ENCODE measurements at regions of chr20 and their contacts with region 1.

Region 1: GRCh38 chr20:35954200-35954906 is at the start of gene SCAND1:
- DNase-seq: peak; percentile 95 to 99
- ATAC-seq: peak; percentile 94
- H3K4me3 ChIP-seq: peak within 1 kb of the TSS; percentile 95
- H3K27ac ChIP-seq: peak within 1 kb of the TSS; percentile 96 to 97
- H3K4me1 ChIP-seq: peaks cover 15% of the 10 kb centered on the region
- CTCF ChIP-seq: peak; percentile 99
- EP300 ChIP-seq: no peak
- POLR2A ChIP-seq: peak; percentile 85
- RAD21 ChIP-seq: peak; percentile 46 to 69; a peak in 4 of 5 replicates
- polyA plus RNA-seq, gene SCAND1: 9.1 and 10.2 TPM in 2 replicates

Region 2: DNA sequence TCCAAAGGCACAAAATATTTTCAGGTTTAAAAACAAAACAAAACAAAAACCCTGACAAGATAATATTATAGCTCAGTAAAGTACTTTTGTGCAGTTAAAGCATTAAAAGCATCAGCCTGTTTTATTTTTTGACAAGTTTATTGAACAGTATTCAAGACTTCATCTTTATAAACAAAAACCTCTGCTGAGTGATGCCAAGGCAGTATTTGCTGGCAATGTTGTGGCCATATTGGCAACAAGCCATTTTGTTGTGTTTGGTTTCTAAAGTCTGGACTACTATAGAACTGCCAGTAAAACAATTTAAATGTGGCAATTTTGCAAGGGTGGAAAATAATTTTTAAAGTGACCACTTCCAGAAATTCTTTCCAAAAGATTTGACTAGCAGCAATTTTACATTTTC is 305.5 kb before region 1 on chr20:
- CTCF ChIA-PET with region 1: no interaction called
- POLR2A ChIA-PET with region 1: no interaction called
- DNase-seq: no peak
- ATAC-seq: no peak
- H3K4me3 ChIP-seq: no peak overlapping the region
- H3K27ac ChIP-seq: no peak overlapping the region
- H3K4me1 ChIP-seq: no peaks in the 10 kb centered on the region; the same call in 2 of the 3 replicates
- CTCF ChIP-seq: no peak
- EP300 ChIP-seq: no peak
- POLR2A ChIP-seq: no peak
- RAD21 ChIP-seq: no peak

Region 3: DNA sequence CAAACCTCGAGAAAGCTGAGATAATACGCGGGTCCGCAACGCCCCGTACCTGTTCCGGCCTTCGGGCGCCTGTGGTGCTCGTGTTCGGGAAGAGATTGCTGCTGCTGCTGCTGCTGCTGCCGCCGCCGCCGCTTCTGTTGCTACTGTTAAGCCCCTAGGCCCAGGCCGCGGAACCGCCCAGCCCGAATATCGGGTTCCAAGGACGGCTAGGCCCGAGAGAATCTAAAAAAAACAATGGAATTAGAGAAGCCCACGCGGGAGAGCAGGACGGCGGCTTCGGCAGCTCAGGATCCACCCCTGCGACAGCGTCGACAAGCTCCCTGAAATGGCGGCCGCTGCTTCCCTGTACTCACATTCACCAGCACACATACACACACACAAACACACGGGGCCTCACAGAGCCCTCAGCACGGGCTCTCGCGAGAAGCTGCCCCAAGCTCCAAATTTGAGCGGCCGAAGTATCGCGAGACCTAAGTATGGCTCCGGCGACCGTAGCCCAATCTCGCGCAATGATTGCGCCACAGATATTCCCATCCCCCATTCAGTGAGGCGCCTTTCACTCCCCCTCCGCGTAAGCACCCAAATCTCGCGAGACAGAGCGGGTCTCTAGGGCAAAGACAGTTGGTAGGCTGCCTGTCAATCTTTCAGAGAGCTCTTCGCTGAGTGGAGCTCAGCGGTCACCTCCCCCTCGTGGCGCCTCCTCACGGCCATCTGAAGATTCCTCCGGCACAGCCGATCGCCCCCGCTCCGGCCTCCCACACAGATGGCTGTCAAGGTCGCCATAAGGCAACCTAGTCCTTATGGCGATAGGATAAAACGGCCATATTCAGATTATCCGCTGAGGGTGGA is 212.2 kb before region 1 on chr20 and contains the start of gene RBM39:
- CTCF ChIA-PET with region 1: interaction called, 11 read pairs
- POLR2A ChIA-PET with region 1: interaction called, 32 read pairs
- DNase-seq: peak; percentile 95 to 100
- ATAC-seq: peak; percentile 93 to 95
- H3K4me3 ChIP-seq: peak within 1 kb of the TSS; percentile 87
- H3K27ac ChIP-seq: peak within 1 kb of the TSS; percentile 98
- H3K4me1 ChIP-seq: peaks cover 45% of the 10 kb centered on the region
- CTCF ChIP-seq: no peak
- EP300 ChIP-seq: peak in 1 of 2 experiments; percentile 49; a peak in 1 of 5 replicates
- POLR2A ChIP-seq: peak; percentile 89
- RAD21 ChIP-seq: 0 out of 5 replicates have a peak, but pooled peaks of 1 of the 2 experiments have one; percentile 18
- polyA plus RNA-seq, gene RBM39: 127 and 264 TPM in 2 replicates

Region 4: GRCh38 chr20:35912881-35913280 is 41.5 kb before region 1 on chr20:
- CTCF ChIA-PET with region 1: interaction called, 10 read pairs
- POLR2A ChIA-PET with region 1: no interaction called
- DNase-seq: no peak
- ATAC-seq: no peak
- H3K4me3 ChIP-seq: no peak overlapping the region
- H3K27ac ChIP-seq: no peak overlapping the region
- H3K4me1 ChIP-seq: no peaks in the 10 kb centered on the region
- CTCF ChIP-seq: no peak
- EP300 ChIP-seq: no peak
- POLR2A ChIP-seq: no peak
- RAD21 ChIP-seq: no peak

Region 5: GRCh38 chr20:35968931-35969330 is 14.6 kb after region 1 on chr20:
- CTCF ChIA-PET with region 1: interaction called, 82 read pairs
- POLR2A ChIA-PET with region 1: interaction called, 8 read pairs
- DNase-seq: no peak
- ATAC-seq: peak; percentile 24 to 34; a peak in 4 of 6 replicates
- H3K4me3 ChIP-seq: no peak overlapping the region
- H3K27ac ChIP-seq: no peak overlapping the region
- H3K4me1 ChIP-seq: peaks cover 4% of the 10 kb centered on the region; the same call in 1 of the 3 replicates
- CTCF ChIP-seq: no peak
- EP300 ChIP-seq: no peak
- POLR2A ChIP-seq: no peak
- RAD21 ChIP-seq: no peak

Region 6: GRCh38 chr20:35988910-35989463 is 34.6 kb after region 1 on chr20:
- CTCF ChIA-PET with region 1: interaction called, 34 read pairs
- POLR2A ChIA-PET with region 1: interaction called, 8 read pairs
- DNase-seq: no peak
- ATAC-seq: no peak
- H3K4me3 ChIP-seq: no peak overlapping the region
- H3K27ac ChIP-seq: no peak overlapping the region
- H3K4me1 ChIP-seq: peaks cover 15% of the 10 kb centered on the region
- CTCF ChIP-seq: no peak
- EP300 ChIP-seq: no peak
- POLR2A ChIP-seq: no peak
- RAD21 ChIP-seq: no peak

Region 7: DNA sequence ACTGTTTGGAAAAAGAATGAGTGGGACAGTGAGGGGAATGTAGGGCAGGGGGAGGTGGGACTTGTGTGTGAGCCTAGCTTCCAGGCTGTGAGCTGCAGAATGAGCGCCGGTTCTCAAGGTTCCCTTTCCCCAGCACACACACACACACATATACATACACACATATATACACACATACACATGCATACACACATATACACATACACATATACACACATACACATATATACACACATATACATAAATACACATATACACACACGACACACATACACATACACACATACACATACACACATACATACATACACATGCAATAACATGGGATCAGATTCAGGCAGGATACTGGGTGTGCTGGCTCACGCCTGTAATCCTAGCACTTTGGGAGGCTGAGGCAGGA is 80.5 kb after region 1 on chr20:
- CTCF ChIA-PET with region 1: no interaction called
- POLR2A ChIA-PET with region 1: no interaction called
- DNase-seq: no peak
- ATAC-seq: no peak
- H3K4me3 ChIP-seq: no peak overlapping the region
- H3K27ac ChIP-seq: no peak overlapping the region
- H3K4me1 ChIP-seq: peaks cover 11% of the 10 kb centered on the region; the same call in 2 of the 3 replicates
- CTCF ChIP-seq: no peak
- EP300 ChIP-seq: no peak
- POLR2A ChIP-seq: no peak
- RAD21 ChIP-seq: no peak

Region 8: DNA sequence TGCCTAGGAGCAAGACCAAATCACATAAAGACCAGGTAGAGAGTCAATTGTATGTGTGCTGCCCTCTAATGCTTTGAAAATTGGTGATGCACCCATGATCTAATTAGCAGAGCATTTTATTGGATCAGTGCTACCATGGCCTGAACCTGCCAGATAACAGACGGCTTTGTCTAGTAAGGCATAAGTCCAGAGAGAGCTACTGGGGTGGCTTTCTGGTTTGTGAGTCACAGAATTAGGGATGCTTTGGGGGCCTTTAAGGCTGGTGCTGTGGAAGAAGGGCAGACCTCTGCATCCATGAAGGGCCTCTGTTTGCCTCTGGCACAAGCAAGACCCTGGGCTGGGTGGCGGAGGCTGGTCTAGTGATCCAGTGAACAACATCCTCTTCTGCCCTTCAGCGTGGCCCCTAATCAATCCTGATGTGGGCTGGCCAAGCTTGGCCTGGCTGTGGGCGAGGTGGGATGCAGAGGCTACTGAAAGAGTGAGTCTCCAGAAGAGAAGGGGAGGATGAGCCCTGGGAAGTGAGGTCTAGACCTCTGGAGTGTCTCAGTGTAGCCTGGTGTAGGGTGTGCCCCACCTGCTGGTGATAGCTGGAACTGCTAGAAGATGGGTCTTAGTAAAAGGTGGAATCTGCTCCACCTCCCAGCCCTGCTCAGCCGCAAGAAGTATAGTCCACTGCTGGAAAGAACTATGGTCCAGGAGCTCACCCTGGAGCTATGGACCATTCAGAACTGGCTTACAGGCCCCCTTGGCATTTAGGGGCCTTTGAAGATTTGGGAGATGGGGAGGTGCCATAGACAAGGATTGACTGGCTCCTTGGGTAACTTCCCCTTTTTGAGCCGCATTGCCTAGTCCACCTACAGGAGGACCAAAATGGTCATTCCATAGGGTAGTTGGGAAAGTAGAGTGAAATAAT is 245.2 kb after region 1 on chr20:
- CTCF ChIA-PET with region 1: interaction called, 10 read pairs
- POLR2A ChIA-PET with region 1: no interaction called
- DNase-seq: peak; percentile 80 to 91
- ATAC-seq: peak; percentile 89 to 94
- H3K4me3 ChIP-seq: no peak overlapping the region
- H3K27ac ChIP-seq: peak overlapping the region in 1 of 2 experiments; percentile 34; a peak in 1 of 6 replicates
- H3K4me1 ChIP-seq: no peaks in the 10 kb centered on the region
- CTCF ChIP-seq: peak; percentile 81
- EP300 ChIP-seq: no peak
- POLR2A ChIP-seq: no peak
- RAD21 ChIP-seq: peak; percentile 84 to 88

Measured in A549 (cell line).